Endothelial cell of umbilical vein (primary cell): ENCODE measurements at regions of chr11 and their contacts with region 1.

Region 1: GRCh38 chr11:60363542-60364510 is 14.5 kb upstream of the MS4A7 start:
- DNase-seq: peak; percentile 67
- H3K4me3 ChIP-seq: no peak overlapping the region
- H3K27ac ChIP-seq: no peak overlapping the region
- H3K4me1 ChIP-seq: no peaks in the 10 kb centered on the region
- H3K27me3 ChIP-seq: peaks cover 15 to 16% of the 10 kb centered on the region in 2 experiments
- CTCF ChIP-seq: peak; percentile 66 to 68
- POLR2A ChIP-seq: no peak

Region 2: DNA sequence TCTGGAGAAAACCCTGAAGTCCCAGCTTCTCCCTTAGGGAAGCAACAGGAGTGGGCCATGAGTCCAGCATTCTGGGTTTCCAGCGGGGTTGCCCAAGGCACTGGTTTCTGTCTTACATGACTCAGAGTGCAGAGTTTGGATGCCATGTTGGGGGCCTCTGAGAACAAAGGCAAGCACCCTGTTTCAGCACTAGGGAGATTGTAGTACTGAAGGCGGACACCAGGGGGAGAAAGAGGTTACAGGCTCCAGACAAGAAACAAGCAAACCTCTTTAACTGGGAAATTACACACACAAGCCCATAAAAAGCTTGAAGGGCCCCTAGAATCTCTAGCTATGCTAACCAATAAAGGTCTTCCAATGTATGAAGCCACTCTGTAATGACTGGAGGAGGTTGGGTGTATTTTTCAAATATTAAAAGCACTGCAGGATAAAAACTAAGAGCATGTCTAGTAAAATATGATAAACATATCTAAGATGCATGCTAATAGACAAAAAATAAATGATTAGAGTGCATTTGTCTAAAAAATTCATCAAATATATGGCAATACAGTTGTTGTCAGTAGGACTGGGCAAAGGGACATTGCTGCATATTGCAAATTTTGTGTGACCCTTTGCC is 29.7 kb before region 1 on chr11:
- CTCF ChIA-PET with region 1: interaction called, 13 read pairs
- POLR2A ChIA-PET with region 1: no interaction called
- dilution Hi-C with region 1: no loop called
- intact Hi-C with region 1: no loop called
- DNase-seq: peak; percentile 79
- H3K4me3 ChIP-seq: no peak overlapping the region
- H3K27ac ChIP-seq: no peak overlapping the region
- H3K4me1 ChIP-seq: no peaks in the 10 kb centered on the region
- H3K27me3 ChIP-seq: peaks cover 0 to 3% of the 10 kb centered on the region in 2 experiments
- CTCF ChIP-seq: peak; percentile 65 to 85
- POLR2A ChIP-seq: no peak

Region 3: DNA sequence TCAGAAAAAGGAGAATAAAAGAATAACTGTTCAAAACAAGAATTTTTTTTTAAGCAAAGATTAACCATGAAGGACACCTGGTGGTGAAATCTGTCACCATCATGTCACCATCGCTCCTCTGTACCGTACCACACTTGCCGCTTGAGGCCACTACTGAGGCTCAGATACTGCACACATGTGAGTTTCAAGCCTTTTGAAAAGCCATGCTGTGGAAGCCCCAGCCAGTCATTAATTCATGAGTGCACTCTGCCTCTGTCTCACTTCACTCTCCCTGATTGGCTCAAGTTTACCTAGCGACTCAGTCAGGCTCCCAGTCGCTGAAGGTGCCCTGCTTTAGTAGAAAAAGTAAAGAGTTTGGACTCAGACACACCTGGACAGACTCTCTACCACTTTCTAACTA is 122.2 kb after region 1 on chr11:
- CTCF ChIA-PET with region 1: interaction called, 17 read pairs
- POLR2A ChIA-PET with region 1: no interaction called
- dilution Hi-C with region 1: no loop called
- intact Hi-C with region 1: loop called (anchors 1 kb)
- DNase-seq: peak; percentile 17
- H3K4me3 ChIP-seq: no peak overlapping the region
- H3K27ac ChIP-seq: no peak overlapping the region
- H3K4me1 ChIP-seq: no peaks in the 10 kb centered on the region
- H3K27me3 ChIP-seq: no peaks in the 10 kb centered on the region
- CTCF ChIP-seq: peak in 1 of 2 donors; percentile 37
- POLR2A ChIP-seq: no peak

Region 4: DNA sequence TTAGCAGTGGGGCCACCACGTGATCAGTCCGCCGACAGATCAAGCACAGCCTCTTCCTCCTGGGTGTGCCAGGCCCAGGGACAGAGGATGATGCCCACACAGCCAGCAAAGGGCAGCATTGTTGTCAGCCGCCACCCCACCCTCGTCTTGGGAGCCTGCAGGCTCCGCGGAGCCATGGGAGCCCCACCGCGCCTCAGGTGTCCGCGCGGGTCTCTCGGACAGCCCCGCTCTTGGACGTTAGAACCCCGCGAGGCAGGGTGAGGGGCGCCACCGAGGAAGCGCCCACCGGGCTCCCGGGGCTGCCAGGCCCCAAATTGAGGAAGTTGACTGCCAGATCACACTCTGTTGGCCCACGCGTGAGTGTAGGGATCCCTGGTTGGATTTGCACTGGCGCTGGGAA is 251.7 kb after region 1 on chr11:
- CTCF ChIA-PET with region 1: interaction called, 147 read pairs
- POLR2A ChIA-PET with region 1: no interaction called
- dilution Hi-C with region 1: no loop called
- intact Hi-C with region 1: loop called (anchors 1 kb)
- DNase-seq: no peak
- H3K4me3 ChIP-seq: no peak overlapping the region
- H3K27ac ChIP-seq: no peak overlapping the region
- H3K4me1 ChIP-seq: no peaks in the 10 kb centered on the region
- H3K27me3 ChIP-seq: peaks cover 2% of the 10 kb centered on the region in 2 experiments
- CTCF ChIP-seq: no peak
- POLR2A ChIP-seq: no peak

Region 5: GRCh38 chr11:60634126-60634525 is 270.3 kb after region 1 on chr11:
- CTCF ChIA-PET with region 1: interaction called, 19 read pairs
- POLR2A ChIA-PET with region 1: no interaction called
- dilution Hi-C with region 1: no loop called
- intact Hi-C with region 1: loop called (anchors 1 kb)
- DNase-seq: peak; percentile 22
- H3K4me3 ChIP-seq: no peak overlapping the region
- H3K27ac ChIP-seq: no peak overlapping the region
- H3K4me1 ChIP-seq: no peaks in the 10 kb centered on the region
- H3K27me3 ChIP-seq: peaks cover 0 to 2% of the 10 kb centered on the region in 2 experiments
- CTCF ChIP-seq: peak; percentile 20 to 44
- POLR2A ChIP-seq: no peak